ENCODE measurements at regions of chr2 and their contacts with region 1.

Region 1: DNA sequence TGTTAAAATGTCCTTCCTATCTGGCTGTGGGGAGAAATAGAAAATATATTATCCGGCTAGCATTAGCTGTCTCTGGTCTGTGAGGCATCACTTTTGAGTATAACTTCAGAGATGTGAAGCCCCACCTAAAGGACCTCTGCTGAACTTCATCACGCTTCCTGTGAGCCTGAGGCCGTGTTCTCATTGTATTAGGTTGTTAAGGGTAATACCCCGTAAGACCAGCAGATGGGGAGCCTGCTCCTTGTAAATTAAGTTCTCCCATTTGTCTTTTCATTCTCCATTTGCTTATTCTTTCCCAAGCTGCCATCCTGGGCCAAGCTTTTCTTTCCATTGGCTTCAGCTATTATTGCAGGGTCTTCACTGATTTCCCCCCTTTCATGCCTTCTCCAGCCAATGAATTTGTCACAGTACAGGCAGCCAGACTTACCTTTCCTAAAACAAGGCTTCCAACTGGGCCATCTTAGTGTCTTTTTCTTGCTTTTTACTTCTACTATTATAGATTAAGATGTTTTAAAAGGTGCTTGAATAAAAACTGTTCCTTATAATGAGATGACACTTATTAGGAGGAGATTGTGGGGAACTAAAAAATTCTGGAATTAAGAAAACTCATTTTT is 12.4 kb downstream of the NIF3L1 start:
- DNase-seq: peak; percentile 89
- ATAC-seq: peak; percentile 100
- H3K4me3 Mint-ChIP-seq: no peak overlapping the region
- H3K27ac Mint-ChIP-seq: peak overlapping the region; percentile 25
- H3K4me1 Mint-ChIP-seq: peaks cover 24% of the 10 kb centered on the region
- H3K27me3 Mint-ChIP-seq: no peaks in the 10 kb centered on the region

Region 2: DNA sequence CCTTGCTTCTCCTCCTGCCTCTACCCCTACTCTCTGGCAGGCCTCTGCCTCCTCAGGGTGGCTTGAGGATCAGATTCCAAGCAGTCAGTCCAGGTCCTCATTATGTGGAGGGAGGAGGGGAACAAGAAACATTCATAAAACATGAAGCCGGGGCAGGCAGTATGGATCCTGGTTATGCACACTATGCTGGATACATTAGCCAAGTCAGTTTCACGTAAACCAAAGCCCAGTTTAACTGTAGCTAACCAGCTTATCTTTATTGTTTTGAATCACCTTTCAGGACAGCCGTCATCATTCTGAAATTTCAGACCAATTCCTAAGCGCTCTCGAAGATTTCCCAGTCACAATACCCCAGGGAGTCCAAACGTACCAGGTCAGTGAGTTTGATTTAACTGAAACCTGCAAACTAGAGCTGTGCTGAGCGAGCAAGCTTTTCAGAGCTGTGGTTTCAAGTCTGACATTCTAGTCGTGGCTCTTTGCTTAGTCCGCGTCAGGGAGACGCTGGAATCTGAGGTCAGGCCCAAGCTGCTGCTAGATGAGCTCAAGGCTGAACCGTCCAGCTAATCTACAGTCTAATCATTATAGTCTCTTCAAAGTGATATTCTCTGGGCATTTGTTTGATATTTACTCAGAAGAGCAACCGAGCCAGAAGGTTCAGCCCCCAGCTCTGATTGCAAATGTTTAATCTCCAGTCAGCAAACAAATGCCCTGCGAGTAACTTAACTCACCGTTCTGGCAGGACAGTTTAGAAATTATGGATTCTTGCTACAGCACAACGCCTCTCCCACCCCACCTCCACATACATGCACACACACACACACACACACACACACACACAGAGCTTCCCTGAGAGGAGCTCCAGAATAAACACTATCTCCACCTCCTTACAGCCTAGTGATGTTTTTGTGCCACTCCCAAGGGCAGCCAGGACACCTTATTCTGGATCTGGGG is 153.6 kb before region 1 on chr2:
- CTCF ChIA-PET with region 1: no interaction called
- POLR2A ChIA-PET with region 1: no interaction called
- DNase-seq: no peak
- ATAC-seq: no peak
- H3K4me3 Mint-ChIP-seq: no peak overlapping the region
- H3K27ac Mint-ChIP-seq: no peak overlapping the region
- H3K4me1 Mint-ChIP-seq: no peaks in the 10 kb centered on the region
- H3K27me3 Mint-ChIP-seq: peaks cover 13% of the 10 kb centered on the region

Region 3: DNA sequence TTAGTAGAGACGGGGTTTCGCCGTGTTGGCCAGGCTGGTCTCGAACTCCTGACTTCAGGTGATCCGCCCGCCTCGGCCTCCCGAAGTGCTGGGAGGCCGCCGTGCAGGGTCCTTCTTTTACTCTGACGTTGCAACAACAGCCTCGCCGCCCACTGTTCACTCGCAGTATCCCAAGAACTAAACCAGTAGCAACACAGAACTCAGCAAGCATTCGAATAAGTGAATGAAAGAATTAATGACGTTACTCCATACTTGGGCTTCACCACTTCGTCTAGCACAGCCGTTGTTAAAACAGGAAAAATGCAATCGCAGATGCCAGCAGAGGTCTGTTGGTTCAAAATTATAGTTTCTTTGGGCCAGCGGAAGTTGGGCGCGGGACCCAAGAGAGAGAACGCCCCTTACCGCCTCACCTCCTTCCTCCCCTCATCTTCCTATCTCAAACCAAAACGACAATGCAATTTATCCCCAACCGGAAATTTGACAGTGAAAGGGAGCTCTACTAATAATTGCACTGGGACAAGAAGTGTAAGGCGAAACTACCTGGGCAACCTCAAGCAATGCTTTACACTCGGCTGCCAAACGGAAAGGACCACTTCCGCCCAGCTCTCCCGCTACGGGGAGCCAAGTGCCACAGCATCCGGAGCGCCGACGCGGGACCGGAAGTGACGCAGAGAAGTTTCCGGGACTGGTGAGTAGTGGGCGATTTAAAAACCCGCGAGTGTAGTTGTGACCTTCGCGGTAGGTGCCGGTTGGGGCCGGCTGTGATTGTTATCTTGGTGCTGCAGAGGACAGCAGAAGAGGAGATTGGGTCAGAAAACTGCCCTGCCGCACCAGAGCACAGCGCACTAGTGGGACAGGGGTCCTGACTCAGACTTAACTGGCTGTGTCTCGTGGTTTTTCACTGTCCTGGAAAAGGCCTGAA is 12.6 kb before region 1 on chr2 and contains the starts of genes NIF3L1 and PPIL3:
- CTCF ChIA-PET with region 1: interaction called, 23 read pairs
- POLR2A ChIA-PET with region 1: interaction called, 10 read pairs
- DNase-seq: peak; percentile 99
- ATAC-seq: peak; percentile 86
- H3K4me3 Mint-ChIP-seq: peak within 1 kb of the TSS; percentile 90
- H3K27ac Mint-ChIP-seq: peak within 1 kb of the TSS; percentile 98
- H3K4me1 Mint-ChIP-seq: peaks cover 49% of the 10 kb centered on the region
- H3K27me3 Mint-ChIP-seq: no peaks in the 10 kb centered on the region
- total RNA-seq, gene NIF3L1: 37.0 to 39.0 TPM
- total RNA-seq, gene PPIL3: 81.6 to 82.9 TPM

Region 4: DNA sequence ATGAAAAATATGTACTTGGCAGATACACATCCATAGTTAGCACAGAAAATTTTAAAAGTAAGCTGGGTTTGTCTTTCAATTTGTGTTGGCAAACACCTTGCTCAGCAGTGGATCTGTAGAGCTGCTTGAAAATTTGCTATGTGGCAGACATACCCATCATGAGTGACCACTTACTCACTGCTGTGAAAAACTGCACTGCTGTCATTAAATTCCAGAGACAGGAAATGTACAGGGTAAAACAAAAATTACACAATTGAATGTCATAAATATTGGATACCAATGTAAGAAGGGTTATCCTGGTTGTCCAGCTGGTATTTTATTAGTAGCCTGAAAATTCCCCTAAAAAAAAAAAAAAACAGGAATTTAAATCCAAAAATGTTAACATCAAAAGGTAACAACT is 12.1 kb after region 1 on chr2:
- CTCF ChIA-PET with region 1: interaction called, 14 read pairs
- POLR2A ChIA-PET with region 1: no interaction called
- DNase-seq: no peak
- ATAC-seq: no peak
- H3K4me3 Mint-ChIP-seq: no peak overlapping the region
- H3K27ac Mint-ChIP-seq: no peak overlapping the region
- H3K4me1 Mint-ChIP-seq: no peaks in the 10 kb centered on the region
- H3K27me3 Mint-ChIP-seq: no peaks in the 10 kb centered on the region

Region 5: GRCh38 chr2:201158111-201158929 is 256.8 kb after region 1 on chr2:
- CTCF ChIA-PET with region 1: interaction called, 13 read pairs
- POLR2A ChIA-PET with region 1: no interaction called
- DNase-seq: peak; percentile 80
- ATAC-seq: peak; percentile 90
- H3K4me3 Mint-ChIP-seq: no peak overlapping the region
- H3K27ac Mint-ChIP-seq: peak overlapping the region; percentile 76
- H3K4me1 Mint-ChIP-seq: peaks cover 11% of the 10 kb centered on the region
- H3K27me3 Mint-ChIP-seq: no peaks in the 10 kb centered on the region

Region 6: DNA sequence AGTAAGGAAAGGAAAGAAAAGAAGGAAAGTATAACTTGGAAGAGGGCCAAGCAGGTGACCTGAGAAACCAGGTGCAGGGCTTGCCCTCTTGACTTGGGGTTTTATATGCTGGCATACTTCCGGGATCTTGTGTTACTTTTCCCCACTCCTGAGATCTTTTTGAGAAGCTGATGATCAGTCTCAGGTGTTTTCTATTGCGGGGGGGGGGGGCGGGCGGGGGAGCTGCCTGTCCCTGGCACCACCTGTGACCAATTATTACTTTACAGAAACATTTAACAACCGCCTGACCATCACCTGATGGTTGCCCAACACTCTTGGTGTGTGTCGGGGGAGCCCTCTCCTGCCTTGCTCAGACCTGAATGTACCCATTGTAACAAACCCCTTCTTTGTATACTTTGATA is 274.5 kb after region 1 on chr2:
- CTCF ChIA-PET with region 1: interaction called, 37 read pairs
- POLR2A ChIA-PET with region 1: interaction called, 4 read pairs
- DNase-seq: no peak
- ATAC-seq: no peak
- H3K4me3 Mint-ChIP-seq: no peak overlapping the region
- H3K27ac Mint-ChIP-seq: no peak overlapping the region
- H3K4me1 Mint-ChIP-seq: peaks cover 36% of the 10 kb centered on the region
- H3K27me3 Mint-ChIP-seq: no peaks in the 10 kb centered on the region

Measured in activated CD8-positive, alpha-beta T cell treated with anti-CD3 and anti-CD28 coated beads, Interleukin-2, amount 10 ng/mL, durations not matched to agents 7 days and 5 days (primary cell).